Pancreas (tissue), 10 donors: ENCODE measurements at regions of chr7 and their contacts with region 1.

Region 1: GRCh38 chr7:3897438-3898385 is 596.7 kb downstream of the SDK1 start:
- DNase-seq: peak in 1 of 6 donors; percentile 45
- ATAC-seq: peak; percentile 61 to 85 (median 74)
- H3K4me3 ChIP-seq: no peak overlapping the region
- H3K27ac ChIP-seq: no peak overlapping the region
- H3K4me1 ChIP-seq: no peaks in the 10 kb centered on the region
- H3K27me3 ChIP-seq: no peaks in the 10 kb centered on the region
- CTCF ChIP-seq: peak; percentile 57 to 73 (median 68)

Region 2: GRCh38 chr7:3300651-3301378 is 596.9 kb before region 1 on chr7 and contains the start of gene SDK1:
- intact Hi-C with region 1: loop called in 1 of 3 experiments (anchors 10 kb)
- DNase-seq: peak; percentile 92 to 98 (median 94)
- ATAC-seq: peak; percentile 90 to 93 (median 92)
- H3K4me3 ChIP-seq: peak within 1 kb of the TSS; percentile 61 to 76 (median 67)
- H3K27ac ChIP-seq: peak within 1 kb of the TSS; percentile 16 to 60 (median 53)
- H3K4me1 ChIP-seq: peaks cover 0 to 9% (median 0%) of the 10 kb centered on the region in 3 donors
- H3K27me3 ChIP-seq: no peaks in the 10 kb centered on the region
- CTCF ChIP-seq: peak; percentile 84 to 97 (median 95)
- total RNA-seq, gene SDK1: 15.0 to 30.8 (median 22.3) TPM